ENCODE measurements at regions of chr14 and their contacts with region 1.

Region 1: DNA sequence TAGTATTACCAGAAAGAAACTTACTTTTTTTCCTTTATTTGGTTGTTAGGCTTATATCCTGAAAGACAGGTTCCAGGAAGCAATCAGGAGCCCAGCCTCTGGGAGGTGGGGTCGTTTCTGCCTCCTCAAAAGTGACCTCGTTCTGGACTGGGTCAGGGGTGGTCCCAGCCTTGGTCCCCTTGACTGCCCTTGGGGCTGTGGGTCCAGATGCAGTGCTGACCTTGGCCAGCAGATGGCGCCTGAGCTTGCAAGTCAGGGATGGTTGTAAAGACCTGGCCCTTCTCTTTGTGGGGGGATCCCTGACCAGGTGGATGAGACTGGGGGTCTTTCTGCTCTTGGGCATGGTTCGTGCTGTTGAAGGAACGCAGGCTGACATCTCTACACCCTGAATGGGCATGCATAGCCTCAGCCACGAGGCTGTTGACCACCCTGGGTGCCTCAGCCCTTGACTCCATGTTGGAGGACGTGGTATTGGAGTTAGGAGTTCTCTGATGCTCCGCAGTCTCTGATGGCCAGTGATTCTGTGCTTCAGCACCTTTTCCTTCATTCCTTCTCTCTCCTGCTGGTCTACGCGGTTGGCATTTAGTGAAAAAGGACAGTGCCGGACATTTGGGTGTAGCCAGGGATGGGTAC is 62.4 kb downstream of the ADCK1 start:
- DNase-seq: peak; percentile 83
- ATAC-seq: peak; percentile 81
- H3K4me3 Mint-ChIP-seq: no peak overlapping the region
- H3K27ac Mint-ChIP-seq: no peak overlapping the region
- H3K4me1 Mint-ChIP-seq: no peaks in the 10 kb centered on the region
- H3K27me3 Mint-ChIP-seq: no peaks in the 10 kb centered on the region

Region 2: GRCh38 chr14:77844802-77845201 is 17.5 kb before region 1 on chr14:
- CTCF ChIA-PET with region 1: interaction called, 16 read pairs
- POLR2A ChIA-PET with region 1: no interaction called
- DNase-seq: no peak
- ATAC-seq: no peak
- H3K4me3 Mint-ChIP-seq: no peak overlapping the region
- H3K27ac Mint-ChIP-seq: no peak overlapping the region
- H3K4me1 Mint-ChIP-seq: no peaks in the 10 kb centered on the region
- H3K27me3 Mint-ChIP-seq: no peaks in the 10 kb centered on the region

Region 3: DNA sequence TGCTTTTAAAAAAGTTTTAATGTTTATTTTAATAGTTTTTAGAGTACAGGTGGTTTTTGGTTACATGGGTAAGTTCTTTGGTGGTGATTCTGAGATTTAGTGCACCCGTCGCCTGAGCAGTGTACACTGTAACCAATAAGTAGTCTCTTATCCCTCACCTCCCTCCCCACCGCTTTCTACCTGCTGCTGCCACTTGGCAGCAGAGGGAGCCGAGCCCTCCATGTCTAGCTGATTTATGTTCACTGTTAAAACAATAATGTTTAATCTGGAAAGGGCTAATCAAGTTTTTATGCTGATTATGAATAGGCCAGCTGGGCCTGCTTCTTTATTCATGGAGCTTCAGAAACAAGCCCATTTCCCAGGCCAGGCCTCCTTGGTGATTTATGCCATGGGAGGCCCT is 10.7 kb after region 1 on chr14:
- CTCF ChIA-PET with region 1: interaction called, 12 read pairs
- POLR2A ChIA-PET with region 1: no interaction called
- DNase-seq: no peak
- ATAC-seq: no peak
- H3K4me3 Mint-ChIP-seq: no peak overlapping the region
- H3K27ac Mint-ChIP-seq: no peak overlapping the region
- H3K4me1 Mint-ChIP-seq: no peaks in the 10 kb centered on the region
- H3K27me3 Mint-ChIP-seq: no peaks in the 10 kb centered on the region

Region 4: GRCh38 chr14:78598041-78598920 is 736.0 kb after region 1 on chr14:
- CTCF ChIA-PET with region 1: interaction called, 11 read pairs
- POLR2A ChIA-PET with region 1: no interaction called
- DNase-seq: peak; percentile 56
- ATAC-seq: peak; percentile 82
- H3K4me3 Mint-ChIP-seq: no peak overlapping the region
- H3K27ac Mint-ChIP-seq: no peak overlapping the region
- H3K4me1 Mint-ChIP-seq: no peaks in the 10 kb centered on the region
- H3K27me3 Mint-ChIP-seq: no peaks in the 10 kb centered on the region

Measured in activated CD8-positive, alpha-beta T cell treated with anti-CD3 and anti-CD28 coated beads, Interleukin-2, amount 10 ng/mL, durations not matched to agents 7 days and 5 days (primary cell).